WTC11 (cell line): ENCODE measurements at regions of chr15 and their contacts with region 1.

Region 1: GRCh38 chr15:90482124-90483011 is 47.4 kb upstream of the CRTC3 start:
- DNase-seq: peak; percentile 60
- ATAC-seq: peak; percentile 55
- H3K4me3 Mint-ChIP-seq: no peak overlapping the region
- H3K27ac Mint-ChIP-seq: no peak overlapping the region
- H3K4me1 Mint-ChIP-seq: no peaks in the 10 kb centered on the region
- H3K27me3 Mint-ChIP-seq: no peaks in the 10 kb centered on the region
- CTCF ChIP-seq: no peak; the same call in 1 of the 2 replicates

Region 2: DNA sequence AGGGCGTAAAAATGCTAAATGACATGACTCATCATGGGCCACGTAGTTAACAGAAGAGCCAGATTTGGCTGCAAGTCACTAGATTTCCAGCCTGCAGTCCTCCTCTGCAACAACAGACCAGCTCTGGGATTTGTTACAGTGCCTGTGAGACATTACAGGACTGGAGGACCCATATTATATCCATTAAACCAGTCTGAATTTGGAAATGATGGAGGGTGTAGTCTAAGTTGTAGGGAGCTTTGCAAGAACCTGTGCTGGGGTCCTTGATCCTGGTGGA is 119.5 kb before region 1 on chr15:
- CTCF ChIA-PET with region 1: interaction called, 10 read pairs
- POLR2A ChIA-PET with region 1: no interaction called
- DNase-seq: no peak
- ATAC-seq: no peak
- H3K4me3 Mint-ChIP-seq: no peak overlapping the region
- H3K27ac Mint-ChIP-seq: no peak overlapping the region; the same call in 1 of the 2 replicates
- H3K4me1 Mint-ChIP-seq: peaks cover 18% of the 10 kb centered on the region
- H3K27me3 Mint-ChIP-seq: no peaks in the 10 kb centered on the region
- CTCF ChIP-seq: no peak